Activated naive CD4-positive, alpha-beta T cell treated with anti-CD3 and anti-CD28 coated beads for 36 hours (primary cell): ENCODE measurements at regions of chr12 and their contacts with region 1.

Region 1: DNA sequence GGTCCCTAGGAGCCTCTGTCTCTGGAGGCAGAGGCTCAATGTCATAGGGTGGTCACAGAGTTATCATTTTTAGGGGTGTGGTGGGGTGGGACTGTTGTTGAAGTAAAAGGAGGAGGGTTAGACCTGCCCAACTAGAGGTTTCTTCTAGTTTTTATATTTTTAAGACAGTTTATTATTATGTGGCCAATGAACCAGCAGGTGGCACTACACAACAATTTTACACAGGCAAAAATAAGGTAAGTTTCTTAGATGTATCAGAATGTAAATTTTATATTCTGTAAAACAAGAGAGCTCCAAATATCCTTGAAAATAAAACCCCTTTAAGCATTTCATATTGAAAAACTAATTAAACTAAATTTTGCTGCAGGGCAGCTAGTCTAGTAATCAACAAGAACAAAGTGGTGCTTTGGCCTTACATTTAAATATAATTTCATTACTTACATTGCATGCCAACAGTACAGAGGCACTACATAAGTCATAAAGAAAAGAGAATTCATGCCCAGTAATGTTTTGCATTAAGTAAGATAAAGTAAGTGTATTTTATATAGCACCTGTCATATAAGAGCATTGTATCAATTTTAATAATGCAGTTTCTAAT is 22.2 kb upstream of the OVCH1 start:
- DNase-seq: peak; percentile 57
- H3K4me3 Mint-ChIP-seq: no peak overlapping the region
- H3K27ac Mint-ChIP-seq: no peak overlapping the region
- H3K4me1 Mint-ChIP-seq: no peaks in the 10 kb centered on the region
- H3K27me3 Mint-ChIP-seq: peaks cover 11% of the 10 kb centered on the region

Region 2: GRCh38 chr12:29088611-29089219 is 431.0 kb before region 1 on chr12:
- CTCF ChIA-PET with region 1: no interaction called
- intact Hi-C with region 1: loop called (anchors 5 kb)
- DNase-seq: no peak
- H3K4me3 Mint-ChIP-seq: no peak overlapping the region
- H3K27ac Mint-ChIP-seq: no peak overlapping the region
- H3K4me1 Mint-ChIP-seq: no peaks in the 10 kb centered on the region
- H3K27me3 Mint-ChIP-seq: peaks cover 7% of the 10 kb centered on the region

Region 3: DNA sequence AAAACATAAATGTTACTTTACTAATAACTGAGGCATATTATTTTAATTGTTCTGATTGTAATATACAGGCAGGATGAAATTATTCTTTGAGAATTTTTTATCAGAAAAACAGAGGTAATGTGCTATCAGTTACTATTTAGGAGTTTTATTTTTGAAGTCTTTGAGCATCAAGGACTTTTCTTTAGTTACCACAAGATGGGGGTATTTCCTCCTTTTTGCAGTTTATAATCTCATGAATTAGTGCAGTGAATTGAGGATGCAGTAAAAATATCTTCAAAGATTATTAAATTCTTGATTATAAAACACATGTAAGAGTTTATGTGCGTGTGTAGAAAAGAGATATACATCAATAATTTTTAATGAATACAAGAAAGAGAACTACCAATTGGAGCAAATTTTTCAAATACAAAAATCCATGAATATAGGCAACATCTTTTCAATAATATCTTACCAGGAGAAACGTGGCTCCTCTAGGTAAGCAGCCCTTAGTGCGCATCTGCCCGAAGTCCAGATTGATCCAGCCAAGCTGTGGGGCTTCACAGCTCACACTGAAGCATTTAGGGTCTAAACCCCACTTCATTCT is 210.3 kb before region 1 on chr12:
- CTCF ChIA-PET with region 1: interaction called, 3 read pairs
- intact Hi-C with region 1: loop called (anchors 2 kb)
- DNase-seq: no peak
- H3K4me3 Mint-ChIP-seq: no peak overlapping the region
- H3K27ac Mint-ChIP-seq: no peak overlapping the region
- H3K4me1 Mint-ChIP-seq: no peaks in the 10 kb centered on the region
- H3K27me3 Mint-ChIP-seq: no peaks in the 10 kb centered on the region

Region 4: GRCh38 chr12:29531471-29531870 is 11.8 kb after region 1 on chr12:
- CTCF ChIA-PET with region 1: interaction called, 10 read pairs
- intact Hi-C with region 1: no loop called
- DNase-seq: no peak
- H3K4me3 Mint-ChIP-seq: no peak overlapping the region
- H3K27ac Mint-ChIP-seq: no peak overlapping the region
- H3K4me1 Mint-ChIP-seq: no peaks in the 10 kb centered on the region
- H3K27me3 Mint-ChIP-seq: peaks cover 13% of the 10 kb centered on the region

Region 5: DNA sequence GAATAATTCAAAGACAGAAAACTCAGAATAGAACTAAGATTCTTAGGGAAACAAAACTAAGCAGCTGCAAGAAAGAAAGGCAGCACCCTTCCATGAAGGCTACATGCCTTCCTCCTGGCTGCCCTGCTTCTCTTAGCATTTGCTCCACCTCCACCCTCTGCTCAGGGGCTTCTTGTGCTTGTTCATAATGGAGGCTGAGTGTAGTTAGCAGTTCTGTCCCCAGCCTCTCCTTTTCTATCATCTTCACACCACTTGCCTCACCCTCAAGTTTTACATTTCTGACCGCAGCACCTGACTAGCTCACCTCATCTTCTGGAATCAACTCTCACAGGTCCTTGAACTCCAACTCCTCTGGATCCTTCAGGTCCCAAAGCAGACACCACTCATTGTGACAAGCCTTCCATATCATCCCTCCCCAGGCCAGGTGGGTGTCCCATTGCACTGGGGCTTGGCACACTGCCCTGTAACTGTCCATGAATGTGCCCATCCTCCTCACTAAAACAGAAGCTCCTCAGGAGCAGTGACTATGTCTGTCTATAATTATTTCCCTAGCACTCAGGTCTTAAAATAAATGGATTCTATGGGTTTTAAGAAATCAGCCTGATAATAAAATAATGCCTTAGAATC is 125.0 kb after region 1 on chr12:
- CTCF ChIA-PET with region 1: no interaction called
- intact Hi-C with region 1: no loop called
- DNase-seq: no peak
- H3K4me3 Mint-ChIP-seq: no peak overlapping the region
- H3K27ac Mint-ChIP-seq: no peak overlapping the region
- H3K4me1 Mint-ChIP-seq: no peaks in the 10 kb centered on the region
- H3K27me3 Mint-ChIP-seq: no peaks in the 10 kb centered on the region

Region 6: GRCh38 chr12:29970501-29970900 is 450.8 kb after region 1 on chr12:
- CTCF ChIA-PET with region 1: no interaction called
- intact Hi-C with region 1: no loop called
- DNase-seq: no peak
- H3K4me3 Mint-ChIP-seq: no peak overlapping the region
- H3K27ac Mint-ChIP-seq: no peak overlapping the region
- H3K4me1 Mint-ChIP-seq: no peaks in the 10 kb centered on the region
- H3K27me3 Mint-ChIP-seq: no peaks in the 10 kb centered on the region

Region 7: GRCh38 chr12:30286345-30286926 is 766.8 kb after region 1 on chr12:
- CTCF ChIA-PET with region 1: no interaction called
- intact Hi-C with region 1: loop called (anchors 2 kb)
- DNase-seq: no peak
- H3K4me3 Mint-ChIP-seq: no peak overlapping the region
- H3K27ac Mint-ChIP-seq: no peak overlapping the region
- H3K4me1 Mint-ChIP-seq: no peaks in the 10 kb centered on the region
- H3K27me3 Mint-ChIP-seq: peaks cover 2% of the 10 kb centered on the region

Region 8: DNA sequence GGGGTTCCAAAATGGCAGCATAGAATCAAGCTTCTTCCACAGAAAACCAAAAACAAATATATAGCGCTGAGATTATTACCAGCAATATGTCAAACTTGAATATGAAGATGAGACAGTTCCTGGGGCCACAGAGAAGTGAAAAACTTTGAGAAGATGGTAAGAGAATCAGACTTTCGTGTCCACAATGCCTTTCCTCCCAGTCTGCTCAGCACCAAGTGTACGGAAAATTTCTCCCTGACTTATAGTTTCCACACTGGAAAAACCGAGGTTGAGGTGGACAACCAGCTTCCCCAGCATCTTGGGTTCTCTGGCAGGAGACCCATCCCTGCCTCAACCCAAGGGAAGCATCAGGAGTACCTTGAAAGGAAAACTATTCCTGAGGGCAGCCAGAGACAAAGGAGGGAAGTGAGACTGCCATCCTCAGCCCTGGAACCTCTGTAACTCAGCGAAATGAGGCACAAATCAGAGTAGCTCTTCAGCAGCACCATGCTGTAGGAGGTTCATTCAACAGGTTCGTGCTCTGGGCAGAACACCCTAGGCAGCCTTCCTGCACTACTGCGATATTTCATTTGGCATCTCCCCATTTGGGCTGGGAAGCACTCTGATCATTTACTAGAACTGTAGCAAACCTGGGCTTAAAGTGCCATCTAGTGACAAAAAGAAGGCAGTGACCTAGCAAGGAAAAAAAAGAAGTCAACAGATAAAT is 1287.5 kb after region 1 on chr12:
- CTCF ChIA-PET with region 1: interaction called, 6 read pairs
- intact Hi-C with region 1: loop called (anchors 1 kb)
- DNase-seq: peak; percentile 12
- H3K4me3 Mint-ChIP-seq: no peak overlapping the region
- H3K27ac Mint-ChIP-seq: no peak overlapping the region
- H3K4me1 Mint-ChIP-seq: no peaks in the 10 kb centered on the region
- H3K27me3 Mint-ChIP-seq: peaks cover 14% of the 10 kb centered on the region